ENCODE measurements at regions of chr9 and their contacts with region 1.

Region 1: DNA sequence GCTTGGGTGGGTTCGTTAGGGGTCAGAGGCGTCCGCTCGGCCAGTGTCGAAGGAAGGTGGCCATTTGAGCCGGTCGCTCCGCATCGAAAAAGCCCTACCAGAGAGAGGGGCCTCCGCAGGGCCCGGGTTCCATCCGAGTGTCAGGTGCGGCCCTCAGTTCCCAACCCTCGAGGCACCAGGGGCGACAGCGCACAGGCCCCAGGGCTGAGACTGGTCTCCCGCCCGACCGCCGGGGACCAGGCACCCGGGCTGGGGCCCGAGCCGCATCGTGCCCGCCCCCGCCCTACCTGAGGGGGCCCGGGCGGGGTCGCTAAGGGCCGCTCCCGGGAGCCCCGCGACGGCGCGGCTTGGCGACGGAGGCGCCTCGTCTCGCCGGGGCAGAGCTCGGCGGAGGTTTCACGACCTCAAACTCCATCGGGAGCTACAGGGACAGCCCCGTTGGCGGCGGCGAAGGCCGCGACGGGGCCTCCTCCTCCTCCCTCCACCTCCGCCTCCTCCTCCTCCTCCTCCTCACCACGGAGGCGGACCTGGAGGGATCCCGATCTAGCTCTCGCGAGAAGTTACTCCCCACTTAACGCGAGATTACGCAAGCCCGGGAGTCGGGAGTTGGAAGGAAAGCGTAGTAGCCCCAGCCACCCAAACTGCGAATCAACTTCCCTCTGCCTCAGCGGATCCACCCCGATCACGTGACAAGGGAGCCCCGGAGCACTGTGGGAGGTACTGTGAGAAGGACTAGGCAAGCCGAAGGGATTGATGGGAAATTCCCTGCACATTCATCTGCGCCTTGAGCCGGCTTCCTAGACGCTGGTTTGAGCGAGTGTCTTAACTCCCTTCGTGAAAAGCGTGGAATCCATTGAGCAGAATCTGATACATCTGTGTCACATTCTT is at the start of gene RC3H2:
- DNase-seq: peak; percentile 93 to 99 (median 98)
- H3K4me3 ChIP-seq: peak within 1 kb of the TSS; percentile 86
- H3K4me3 Mint-ChIP-seq: peak within 1 kb of the TSS; percentile 93 to 99 (median 95)
- H3K27ac ChIP-seq: peak within 1 kb of the TSS; percentile 91
- H3K27ac Mint-ChIP-seq: peak within 1 kb of the TSS; percentile 94 to 99 (median 97)
- H3K4me1 ChIP-seq: peaks cover 22% of the 10 kb centered on the region
- H3K4me1 Mint-ChIP-seq: peaks cover 33 to 43% (median 43%) of the 10 kb centered on the region in 3 donors
- H3K27me3 ChIP-seq: no peaks in the 10 kb centered on the region
- H3K27me3 Mint-ChIP-seq: no peaks in the 10 kb centered on the region
- total RNA-seq, gene RC3H2: 32.1 to 34.4 TPM

Region 2: DNA sequence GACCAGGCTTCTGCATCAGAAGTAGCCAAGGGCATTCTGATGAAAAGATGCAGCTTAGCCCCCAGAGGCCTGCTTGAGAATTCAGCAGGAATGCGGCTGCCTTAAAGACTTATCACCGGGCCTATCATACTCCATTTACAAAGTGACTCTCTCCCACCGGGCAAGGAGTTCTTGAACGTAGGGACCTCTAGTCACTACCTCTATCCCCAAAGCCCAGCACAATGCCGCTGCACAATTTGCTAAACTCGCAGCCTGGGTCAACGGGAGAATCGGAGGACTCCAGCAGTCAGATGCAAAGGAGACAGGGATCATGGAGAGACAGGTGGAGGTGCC is 77.3 kb before region 1 on chr9:
- CTCF ChIA-PET with region 1: interaction called, 4 read pairs
- POLR2A ChIA-PET with region 1: interaction called, 10 read pairs
- DNase-seq: no peak
- H3K4me3 ChIP-seq: peak overlapping the region; percentile 81
- H3K4me3 Mint-ChIP-seq: peak overlapping the region; percentile 94 to 99 (median 97)
- H3K27ac ChIP-seq: peak overlapping the region; percentile 86
- H3K27ac Mint-ChIP-seq: peak overlapping the region; percentile 89 to 99 (median 97)
- H3K4me1 ChIP-seq: peaks cover 27% of the 10 kb centered on the region
- H3K4me1 Mint-ChIP-seq: peaks cover 40 to 55% (median 52%) of the 10 kb centered on the region in 3 donors
- H3K27me3 ChIP-seq: no peaks in the 10 kb centered on the region
- H3K27me3 Mint-ChIP-seq: no peaks in the 10 kb centered on the region

Region 3: DNA sequence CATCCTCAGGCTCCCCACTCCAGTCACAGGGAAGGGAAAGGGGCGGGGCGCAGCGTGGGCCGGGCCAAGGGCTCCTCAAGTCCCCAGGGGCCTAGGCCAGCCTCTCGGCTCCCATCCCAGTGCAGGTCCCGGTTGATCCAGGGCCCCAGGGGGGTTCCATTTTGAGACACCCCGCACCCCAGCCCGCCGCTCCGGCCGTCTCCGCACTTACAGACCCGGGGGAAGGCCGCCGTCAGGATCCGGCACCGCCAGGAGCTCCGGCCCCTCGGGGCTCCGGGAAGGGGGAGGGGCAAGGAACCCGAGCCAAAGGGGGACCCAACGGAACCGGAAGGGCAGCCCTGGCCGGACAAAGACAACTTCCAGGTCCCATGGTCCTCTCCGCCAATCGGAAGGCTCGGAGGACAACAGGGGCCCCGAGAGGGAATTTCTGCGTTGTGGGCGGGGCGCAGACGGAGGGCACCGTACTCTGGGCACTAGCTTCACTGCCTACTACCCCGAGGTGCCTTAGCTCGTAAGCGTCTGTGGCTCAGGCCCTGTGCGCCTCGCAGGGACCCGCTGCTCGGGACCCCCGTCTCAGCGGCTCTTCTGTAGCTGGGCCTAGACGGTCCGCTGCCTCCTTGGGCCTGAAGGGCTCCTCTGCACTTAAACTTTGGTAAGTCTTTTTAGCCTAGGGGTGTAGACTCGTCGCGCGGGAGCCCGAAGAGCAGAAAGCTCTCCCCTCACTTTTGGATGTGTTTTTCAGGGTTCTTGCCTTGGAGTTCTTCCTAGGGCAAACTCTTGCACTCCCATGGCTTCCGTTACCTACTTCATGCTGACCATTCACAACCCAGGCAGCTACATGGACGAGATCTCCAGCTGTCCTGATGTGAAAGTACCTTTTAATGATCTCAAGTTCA is 26.4 kb after region 1 on chr9 and contains the start of gene ZBTB26:
- CTCF ChIA-PET with region 1: interaction called, 3 read pairs
- POLR2A ChIA-PET with region 1: interaction called, 29 read pairs
- DNase-seq: peak; percentile 85 to 92 (median 88)
- H3K4me3 ChIP-seq: peak within 1 kb of the TSS; percentile 79
- H3K4me3 Mint-ChIP-seq: no peak within 1 kb of the TSS
- H3K27ac ChIP-seq: peak within 1 kb of the TSS; percentile 78
- H3K27ac Mint-ChIP-seq: peak within 1 kb of the TSS in 6 of 8 donors; percentile 88 to 98 (median 96)
- H3K4me1 ChIP-seq: peaks cover 29% of the 10 kb centered on the region
- H3K4me1 Mint-ChIP-seq: peaks cover 23 to 35% (median 28%) of the 10 kb centered on the region in 3 donors
- H3K27me3 ChIP-seq: no peaks in the 10 kb centered on the region
- H3K27me3 Mint-ChIP-seq: no peaks in the 10 kb centered on the region
- total RNA-seq, gene ZBTB26: 4.8 to 5.4 TPM

Region 4: GRCh38 chr9:122940603-122941559 is 35.8 kb after region 1 on chr9 and contains the start of gene RABGAP1:
- CTCF ChIA-PET with region 1: interaction called, 5 read pairs
- POLR2A ChIA-PET with region 1: interaction called, 19 read pairs
- DNase-seq: peak; percentile 94 to 99 (median 99)
- H3K4me3 ChIP-seq: peak within 1 kb of the TSS; percentile 80
- H3K4me3 Mint-ChIP-seq: peak within 1 kb of the TSS; percentile 90 to 96 (median 93)
- H3K27ac ChIP-seq: peak within 1 kb of the TSS; percentile 84
- H3K27ac Mint-ChIP-seq: peak within 1 kb of the TSS; percentile 82 to 98 (median 95)
- H3K4me1 ChIP-seq: peaks cover 21% of the 10 kb centered on the region
- H3K4me1 Mint-ChIP-seq: peaks cover 25 to 45% (median 42%) of the 10 kb centered on the region in 3 donors
- H3K27me3 ChIP-seq: no peaks in the 10 kb centered on the region
- H3K27me3 Mint-ChIP-seq: peaks cover 0 to 2% of the 10 kb centered on the region in 2 donors
- total RNA-seq, gene RABGAP1: 20.7 to 22.2 TPM

Region 5: DNA sequence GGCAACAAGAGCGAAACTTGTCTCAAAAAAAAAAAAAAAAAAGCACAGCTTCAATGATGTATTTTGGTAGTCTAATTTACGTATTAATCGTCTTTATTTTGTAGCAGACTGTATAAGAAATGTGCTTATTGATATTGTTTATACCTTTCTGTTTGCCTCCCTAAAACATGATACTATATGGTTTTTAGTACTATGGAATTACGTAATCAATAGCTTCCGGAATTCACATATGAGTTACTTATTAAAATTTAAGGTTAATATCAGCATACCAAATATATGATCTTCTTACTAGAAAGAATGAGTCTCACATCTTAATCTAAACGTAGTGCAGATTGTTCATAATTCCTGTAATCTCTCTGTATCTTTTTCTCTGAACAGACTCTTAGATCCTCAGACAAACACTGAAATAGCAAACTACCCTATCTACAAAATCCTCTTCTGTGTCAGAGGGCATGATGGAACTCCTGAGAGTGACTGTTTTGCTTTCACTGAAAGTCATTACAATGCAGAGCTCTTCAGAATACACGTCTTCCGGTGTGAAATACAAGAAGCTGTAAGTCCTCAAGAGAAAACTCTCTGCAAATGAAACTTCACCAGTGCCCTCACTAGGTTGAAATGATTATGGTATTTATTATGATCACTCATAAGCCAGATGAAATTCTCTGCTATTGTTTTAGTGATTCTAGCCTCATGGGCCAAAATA is 84.0 kb after region 1 on chr9:
- CTCF ChIA-PET with region 1: interaction called, 3 read pairs
- POLR2A ChIA-PET with region 1: interaction called, 10 read pairs
- DNase-seq: no peak
- H3K4me3 ChIP-seq: no peak overlapping the region
- H3K4me3 Mint-ChIP-seq: no peak overlapping the region
- H3K27ac ChIP-seq: no peak overlapping the region
- H3K27ac Mint-ChIP-seq: peak overlapping the region in 3 of 8 donors; percentile 3 to 74 (median 18)
- H3K4me1 ChIP-seq: no peaks in the 10 kb centered on the region
- H3K4me1 Mint-ChIP-seq: peaks cover 0 to 7% (median 4%) of the 10 kb centered on the region in 3 donors
- H3K27me3 ChIP-seq: no peaks in the 10 kb centered on the region
- H3K27me3 Mint-ChIP-seq: no peaks in the 10 kb centered on the region